ENCODE measurements at regions of chr17 and their contacts with region 1.

Region 1: DNA sequence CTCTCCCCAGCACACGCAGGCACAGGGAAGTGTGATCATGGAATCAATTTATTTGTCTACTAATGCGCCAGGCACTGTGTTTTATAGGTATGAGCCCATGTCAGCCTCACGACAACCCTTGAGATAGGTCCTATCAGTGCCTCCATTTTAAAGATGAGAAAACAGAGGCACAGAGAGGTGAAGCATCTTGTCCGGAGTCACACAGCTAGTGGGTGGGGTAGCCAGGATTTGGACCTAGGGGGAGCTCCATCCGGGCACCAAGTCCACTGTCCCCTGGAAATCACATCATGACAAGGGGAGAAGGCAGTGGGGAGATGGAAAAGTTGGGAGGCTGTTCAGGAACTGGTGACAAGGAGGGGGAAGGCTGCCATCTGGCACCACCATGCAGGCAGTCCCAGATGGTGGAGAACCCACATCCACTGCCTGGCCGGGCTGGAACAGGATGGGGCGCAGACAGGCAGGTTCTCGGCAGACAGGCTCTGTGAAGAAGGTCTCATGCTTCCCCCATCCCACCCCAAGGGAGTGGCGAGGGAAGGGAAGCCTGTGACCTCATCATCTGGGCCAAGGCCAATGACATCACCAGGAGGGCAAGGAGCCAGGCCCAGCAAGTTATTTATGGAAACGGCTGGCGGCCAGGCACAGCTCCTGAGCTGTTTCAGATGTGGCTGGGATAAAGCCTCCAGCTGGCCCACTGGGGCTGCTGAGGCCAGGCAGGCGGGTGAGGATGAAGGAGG is 126.0 kb upstream of the SDK2 start:
- DNase-seq: peak; percentile 53 to 92
- H3K4me3 ChIP-seq: peak overlapping the region in 1 of 2 donors; percentile 3
- H3K27ac ChIP-seq: peak overlapping the region; percentile 53 to 54
- H3K4me1 ChIP-seq: peaks cover 13 to 27% of the 10 kb centered on the region in 2 donors
- H3K27me3 ChIP-seq: no peaks in the 10 kb centered on the region
- CTCF ChIP-seq: no peak

Region 2: DNA sequence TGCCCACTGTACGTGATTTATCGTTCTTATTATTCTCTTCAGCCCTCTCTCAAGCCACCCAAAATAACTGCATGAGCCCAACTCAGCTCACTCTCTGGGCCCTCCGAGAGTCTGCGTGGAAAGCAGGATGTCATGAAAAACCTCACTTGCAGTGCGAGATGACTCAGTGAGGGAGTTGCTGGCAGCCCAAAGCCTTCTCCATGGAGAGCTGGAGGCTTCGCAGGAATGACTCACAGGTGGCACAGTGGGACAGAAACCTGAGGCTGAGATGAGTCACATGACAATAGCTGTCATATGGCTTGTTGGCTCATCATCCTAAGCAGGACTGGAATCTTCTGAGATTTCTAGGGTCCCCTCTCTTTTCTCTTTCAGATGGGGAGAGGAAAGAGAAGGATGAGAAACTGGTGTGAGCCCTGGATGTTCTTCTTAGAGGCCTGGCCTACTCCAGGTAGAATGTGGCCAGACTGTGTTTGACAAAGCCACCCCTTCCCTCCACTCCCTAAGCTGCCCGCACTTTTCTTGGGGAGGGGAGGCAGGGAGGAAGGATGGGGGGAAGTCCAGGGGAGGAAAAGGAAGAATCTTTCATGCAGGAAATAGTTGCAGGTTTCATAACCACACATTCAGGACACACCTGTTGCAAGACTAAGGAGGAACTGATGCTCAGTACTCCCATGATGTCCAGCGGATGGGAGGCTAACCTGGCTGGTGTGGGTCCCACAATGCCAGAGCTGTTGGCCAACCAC is 272.6 kb after region 1 on chr17:
- intact Hi-C with region 1: loop called (anchors 5 kb)
- DNase-seq: peak; percentile 78 to 84
- H3K4me3 ChIP-seq: peak overlapping the region in 1 of 2 donors; percentile 27
- H3K27ac ChIP-seq: peak overlapping the region; percentile 60 to 87
- H3K4me1 ChIP-seq: peaks cover 6 to 8% of the 10 kb centered on the region in 2 donors
- H3K27me3 ChIP-seq: no peaks in the 10 kb centered on the region
- CTCF ChIP-seq: no peak

Region 3: GRCh38 chr17:74203439-74204240 is 433.4 kb after region 1 on chr17 and contains the start of gene RPL38:
- intact Hi-C with region 1: loop called (anchors 10 kb)
- DNase-seq: peak; percentile 74 to 97
- H3K4me3 ChIP-seq: peak within 1 kb of the TSS; percentile 68 to 93
- H3K27ac ChIP-seq: peak within 1 kb of the TSS; percentile 76
- H3K4me1 ChIP-seq: peaks cover 9 to 15% of the 10 kb centered on the region in 2 donors
- H3K27me3 ChIP-seq: peaks cover 4% of the 10 kb centered on the region
- CTCF ChIP-seq: peak; percentile 88 to 96 (median 93)
- total RNA-seq, gene RPL38: 243 TPM

Region 4: GRCh38 chr17:74442670-74443515 is 672.6 kb after region 1 on chr17:
- intact Hi-C with region 1: loop called (anchors 10 kb)
- DNase-seq: peak; percentile 69 to 90
- H3K4me3 ChIP-seq: peak overlapping the region; percentile 14 to 49
- H3K27ac ChIP-seq: peak overlapping the region; percentile 94 to 98
- H3K4me1 ChIP-seq: peaks cover 23 to 58% of the 10 kb centered on the region in 2 donors
- H3K27me3 ChIP-seq: no peaks in the 10 kb centered on the region
- CTCF ChIP-seq: no peak

Measured in ascending aorta (tissue), 2 donors.